GM12878 (cell line): ENCODE measurements at regions of chrX and their contacts with region 1.

Region 1: GRCh38 chrX:130086447-130087206 is 23.7 kb downstream of the ELF4 start:
- DNase-seq: no peak
- ATAC-seq: peak; percentile 52
- H3K4me3 ChIP-seq: peak overlapping the region; percentile 70
- H3K27ac ChIP-seq: peak overlapping the region; percentile 93
- H3K4me1 ChIP-seq: peaks cover 44% of the 10 kb centered on the region
- H3K27me3 ChIP-seq: no peaks in the 10 kb centered on the region
- CTCF ChIP-seq: no peak
- EP300 ChIP-seq: no peak
- POLR2A ChIP-seq: peak; percentile 80
- RAD21 ChIP-seq: no peak

Region 2: DNA sequence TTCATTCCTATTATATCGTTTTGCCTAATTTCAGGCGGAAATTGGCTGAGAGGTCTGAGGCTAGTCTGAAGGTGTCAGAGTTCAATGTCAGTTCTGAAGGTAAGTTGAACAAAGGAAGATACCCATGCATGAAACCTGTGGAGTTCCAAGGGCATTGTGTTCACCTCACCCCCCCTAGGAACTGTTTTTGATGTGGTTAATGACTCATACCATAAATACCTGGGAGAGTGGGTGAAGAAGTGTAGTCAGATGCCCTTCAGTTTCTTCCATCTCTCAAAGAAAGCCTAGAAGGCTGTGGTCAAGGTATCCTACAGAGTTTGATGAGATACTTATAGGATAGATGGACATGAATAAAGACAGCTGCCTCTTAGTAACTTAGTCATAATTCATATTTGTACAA is 178.0 kb before region 1 on chrX:
- CTCF ChIA-PET with region 1: no interaction called
- POLR2A ChIA-PET with region 1: no interaction called
- RAD21 ChIA-PET with region 1: no interaction called
- SMC1A ChIA-PET with region 1: no interaction called
- in situ Hi-C with region 1: no loop called
- intact Hi-C with region 1: no loop called
- DNase-seq: no peak
- ATAC-seq: no peak
- H3K4me3 ChIP-seq: no peak overlapping the region
- H3K27ac ChIP-seq: no peak overlapping the region
- H3K4me1 ChIP-seq: no peaks in the 10 kb centered on the region; the same call in 1 of the 2 replicates
- H3K27me3 ChIP-seq: no peaks in the 10 kb centered on the region
- CTCF ChIP-seq: no peak
- EP300 ChIP-seq: no peak
- POLR2A ChIP-seq: no peak
- RAD21 ChIP-seq: no peak

Region 3: GRCh38 chrX:130110379-130111219 is 24.0 kb after region 1 on chrX and contains the start of gene ELF4:
- CTCF ChIA-PET with region 1: interaction called, 4 read pairs
- POLR2A ChIA-PET with region 1: interaction called, 27 read pairs
- RAD21 ChIA-PET with region 1: interaction called, 16 read pairs
- SMC1A ChIA-PET with region 1: interaction called, 36 read pairs
- in situ Hi-C with region 1: no loop called
- intact Hi-C with region 1: loop called (anchors 1 kb)
- DNase-seq: no peak
- ATAC-seq: peak; percentile 39
- H3K4me3 ChIP-seq: peak within 1 kb of the TSS; percentile 66
- H3K27ac ChIP-seq: peak within 1 kb of the TSS; percentile 78
- H3K4me1 ChIP-seq: peaks cover 15% of the 10 kb centered on the region
- H3K27me3 ChIP-seq: no peaks in the 10 kb centered on the region; a peak in 1 of 4 replicates
- CTCF ChIP-seq: no peak
- EP300 ChIP-seq: no peak
- POLR2A ChIP-seq: peak; percentile 51; the same call in 1 of the 2 replicates
- RAD21 ChIP-seq: no peak
- polyA plus RNA-seq, gene ELF4: 4.0 to 5.2 TPM

Region 4: DNA sequence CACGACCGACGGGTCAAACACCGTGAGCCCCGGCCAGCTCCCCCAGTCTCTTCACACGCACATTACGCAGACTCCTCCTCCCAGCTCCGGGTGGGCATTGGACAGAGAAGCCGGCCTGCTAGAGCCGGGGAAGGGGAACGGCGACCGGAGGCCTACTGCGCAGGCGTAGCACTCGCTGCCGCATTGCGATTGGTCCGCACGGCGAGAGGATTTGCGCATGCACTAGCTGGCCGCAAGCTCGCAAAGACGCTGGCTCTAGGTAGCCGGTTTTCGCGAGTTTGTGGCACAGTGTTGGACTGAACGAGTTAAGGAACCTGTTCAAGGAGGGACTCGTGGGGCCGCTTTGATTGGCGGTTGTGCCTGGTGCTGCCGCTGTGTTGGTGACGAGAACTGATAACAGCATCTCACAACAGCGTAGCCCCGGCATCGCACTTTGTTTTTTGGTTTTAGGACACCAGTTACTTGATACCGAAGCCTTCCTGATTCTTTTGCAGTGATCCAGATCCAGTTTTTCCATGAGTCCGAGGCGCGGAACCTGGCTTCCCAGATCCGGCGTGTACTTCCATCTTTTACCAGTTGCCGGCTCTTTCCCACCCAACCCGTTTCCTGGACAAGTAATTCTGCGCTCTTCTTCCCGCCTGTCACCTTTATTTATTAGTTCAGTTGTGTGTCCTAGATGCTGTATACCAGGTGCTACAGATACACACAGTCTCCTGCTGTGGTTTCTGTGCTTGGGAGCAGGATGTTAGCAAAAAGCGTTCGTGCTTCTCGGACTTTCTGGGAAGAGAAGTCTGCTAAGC is 79.3 kb after region 1 on chrX and contains the start of gene AIFM1:
- CTCF ChIA-PET with region 1: interaction called, 9 read pairs
- POLR2A ChIA-PET with region 1: interaction called, 28 read pairs
- RAD21 ChIA-PET with region 1: interaction called, 13 read pairs
- SMC1A ChIA-PET with region 1: interaction called, 13 read pairs
- in situ Hi-C with region 1: loop called (anchors 10 kb)
- intact Hi-C with region 1: loop called (anchors 5 kb)
- DNase-seq: peak; percentile 91
- ATAC-seq: peak; percentile 93
- H3K4me3 ChIP-seq: peak within 1 kb of the TSS; percentile 69
- H3K27ac ChIP-seq: peak within 1 kb of the TSS; percentile 70
- H3K4me1 ChIP-seq: peaks cover 4% of the 10 kb centered on the region; the same call in 1 of the 2 replicates
- H3K27me3 ChIP-seq: no peaks in the 10 kb centered on the region
- CTCF ChIP-seq: no peak
- EP300 ChIP-seq: no peak
- POLR2A ChIP-seq: peak; percentile 84
- RAD21 ChIP-seq: no peak
- polyA plus RNA-seq, gene AIFM1: 44.2 to 78.0 TPM

Region 5: GRCh38 chrX:130173190-130173895 is 86.7 kb after region 1 on chrX:
- CTCF ChIA-PET with region 1: interaction called, 30 read pairs
- POLR2A ChIA-PET with region 1: interaction called, 28 read pairs
- RAD21 ChIA-PET with region 1: interaction called, 13 read pairs
- SMC1A ChIA-PET with region 1: interaction called, 18 read pairs
- in situ Hi-C with region 1: loop called (anchors 10 kb)
- intact Hi-C with region 1: loop called (anchors 5 kb)
- DNase-seq: peak; percentile 56
- ATAC-seq: peak; percentile 54
- H3K4me3 ChIP-seq: peak overlapping the region; percentile 80
- H3K27ac ChIP-seq: peak overlapping the region; percentile 84
- H3K4me1 ChIP-seq: peaks cover 17% of the 10 kb centered on the region
- H3K27me3 ChIP-seq: no peaks in the 10 kb centered on the region
- CTCF ChIP-seq: no peak
- EP300 ChIP-seq: no peak
- POLR2A ChIP-seq: peak; percentile 71
- RAD21 ChIP-seq: no peak